ENCODE measurements at regions of chr2 and their contacts with region 1.

Region 1: GRCh38 chr2:85888684-85889626 is at the start of gene ST3GAL5:
- DNase-seq: peak; percentile 91
- H3K4me3 ChIP-seq: peak within 1 kb of the TSS; percentile 76 to 86
- H3K27ac ChIP-seq: peak within 1 kb of the TSS; percentile 74 to 82
- H3K4me1 ChIP-seq: no peaks in the 10 kb centered on the region
- H3K27me3 ChIP-seq: no peaks in the 10 kb centered on the region
- CTCF ChIP-seq: peak; percentile 62 to 76 (median 74)
- POLR2A ChIP-seq: peak; percentile 34
- total RNA-seq, gene ST3GAL5: 24.7 to 38.6 TPM

Region 2: GRCh38 chr2:85826990-85827878 is 61.7 kb before region 1 on chr2:
- intact Hi-C with region 1: loop called (anchors 2 kb)
- DNase-seq: peak; percentile 63
- H3K4me3 ChIP-seq: no peak overlapping the region
- H3K27ac ChIP-seq: no peak overlapping the region
- H3K4me1 ChIP-seq: no peaks in the 10 kb centered on the region
- H3K27me3 ChIP-seq: no peaks in the 10 kb centered on the region
- CTCF ChIP-seq: peak; percentile 66 to 94 (median 92)
- POLR2A ChIP-seq: no peak

Region 3: GRCh38 chr2:85976106-85976920 is 87.4 kb after region 1 on chr2:
- intact Hi-C with region 1: no loop called
- DNase-seq: no peak
- H3K4me3 ChIP-seq: no peak overlapping the region
- H3K27ac ChIP-seq: no peak overlapping the region
- H3K4me1 ChIP-seq: peaks cover 2% of the 10 kb centered on the region
- H3K27me3 ChIP-seq: no peaks in the 10 kb centered on the region
- CTCF ChIP-seq: no peak
- POLR2A ChIP-seq: no peak

Region 4: DNA sequence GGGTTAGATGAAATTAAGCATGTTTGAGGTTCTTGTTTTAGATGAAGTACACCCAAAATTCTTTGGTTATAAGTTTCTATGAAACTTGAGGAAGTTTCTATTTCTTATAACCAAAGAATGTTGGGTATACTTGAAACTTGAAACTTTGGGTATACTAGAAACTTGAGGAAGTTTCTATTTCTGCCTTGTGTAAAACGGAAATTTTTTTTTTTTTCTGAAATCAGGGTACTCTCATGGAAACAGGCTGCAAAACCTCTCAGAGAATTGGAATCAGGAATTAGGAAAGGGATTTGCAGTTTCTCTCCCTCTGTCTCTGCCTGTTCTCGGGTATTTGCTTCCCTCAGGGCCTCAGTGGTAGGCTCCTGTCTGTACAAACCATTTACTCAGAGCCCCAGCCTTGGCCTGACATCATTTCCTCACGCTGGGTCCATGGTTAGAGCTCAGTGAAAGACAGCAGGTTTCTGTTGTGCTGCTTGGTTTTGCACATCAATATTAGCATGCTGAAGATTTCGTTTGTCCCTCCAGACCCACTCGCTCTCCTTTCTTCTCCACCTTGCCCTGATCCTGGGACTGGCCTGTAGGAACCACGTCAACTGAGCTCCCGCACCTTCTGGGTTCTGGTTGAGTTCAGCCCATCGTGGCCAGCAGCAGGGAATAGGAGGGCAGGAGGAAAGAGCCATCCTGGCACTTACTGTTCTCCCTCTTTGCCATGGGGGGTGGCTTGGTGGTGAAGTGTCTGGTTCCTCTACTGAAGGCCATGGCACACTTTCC is 110.3 kb after region 1 on chr2:
- intact Hi-C with region 1: loop called (anchors 5 kb)
- DNase-seq: no peak
- H3K4me3 ChIP-seq: no peak overlapping the region
- H3K27ac ChIP-seq: peak overlapping the region in 1 of 2 donors; percentile 39
- H3K4me1 ChIP-seq: no peaks in the 10 kb centered on the region
- H3K27me3 ChIP-seq: no peaks in the 10 kb centered on the region
- CTCF ChIP-seq: no peak
- POLR2A ChIP-seq: no peak

Region 5: DNA sequence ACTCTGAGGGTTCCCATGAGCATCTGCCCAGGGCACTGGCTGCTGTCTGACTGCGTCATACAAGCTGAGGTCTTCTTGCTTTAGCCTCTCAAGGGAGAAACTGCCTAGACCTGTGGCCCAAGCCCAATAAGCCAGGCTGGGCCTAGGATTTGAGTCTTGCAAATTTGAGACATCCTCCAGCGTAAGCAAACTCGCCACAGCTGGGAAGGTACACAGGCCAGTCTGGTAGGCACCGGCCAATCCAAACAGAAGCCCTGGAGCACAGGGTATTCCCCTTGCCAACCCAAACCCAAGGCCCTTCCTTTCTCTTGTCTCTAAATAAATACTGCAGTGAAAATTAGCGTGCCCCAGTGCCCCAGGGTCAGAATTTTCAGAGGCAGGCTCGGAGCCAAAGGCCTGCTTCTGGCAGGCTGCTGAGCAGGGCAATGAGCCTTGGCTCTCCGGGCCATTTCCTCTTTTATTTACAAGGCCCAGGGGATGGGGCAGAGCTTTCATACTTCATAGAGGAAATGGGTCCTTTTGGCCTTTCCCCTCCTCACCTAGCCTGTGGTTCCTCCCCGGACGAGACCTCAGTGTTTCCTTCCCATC is 183.4 kb after region 1 on chr2:
- intact Hi-C with region 1: loop called (anchors 1 kb)
- DNase-seq: peak; percentile 78
- H3K4me3 ChIP-seq: no peak overlapping the region
- H3K27ac ChIP-seq: peak overlapping the region; percentile 6 to 32
- H3K4me1 ChIP-seq: peaks cover 11% of the 10 kb centered on the region
- H3K27me3 ChIP-seq: no peaks in the 10 kb centered on the region
- CTCF ChIP-seq: no peak
- POLR2A ChIP-seq: no peak

Region 6: DNA sequence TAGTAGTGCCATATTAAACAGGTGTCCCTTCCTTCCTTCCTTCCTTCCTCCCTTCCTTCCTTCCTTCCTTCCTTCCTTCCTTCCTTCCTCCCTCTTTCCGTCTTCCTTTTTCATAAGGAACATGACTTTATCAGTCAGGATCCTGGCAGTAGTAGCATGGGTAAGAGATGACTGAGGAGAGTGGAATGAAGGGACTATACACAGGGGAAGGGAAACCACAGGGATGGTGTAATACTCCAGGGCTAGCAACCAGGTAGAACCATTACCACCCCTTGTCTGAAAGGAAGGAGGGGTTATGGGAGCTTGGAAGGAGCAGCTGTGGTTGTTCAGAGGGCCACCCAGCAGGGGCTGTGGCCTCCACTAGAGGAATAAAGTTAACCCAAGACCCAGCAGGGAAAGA is 529.0 kb after region 1 on chr2:
- intact Hi-C with region 1: no loop called
- DNase-seq: no peak
- H3K4me3 ChIP-seq: no peak overlapping the region
- H3K27ac ChIP-seq: no peak overlapping the region
- H3K4me1 ChIP-seq: no peaks in the 10 kb centered on the region
- H3K27me3 ChIP-seq: no peaks in the 10 kb centered on the region
- CTCF ChIP-seq: no peak
- POLR2A ChIP-seq: no peak